H1 (cell line): ENCODE measurements at regions of chr16 and their contacts with region 1.

Region 1: GRCh38 chr16:89289428-89290395 is 72.2 kb downstream of the ZNF778 start:
- DNase-seq: peak; percentile 59 to 92
- H3K4me3 ChIP-seq: no peak overlapping the region
- H3K27ac ChIP-seq: no peak overlapping the region
- H3K4me1 ChIP-seq: peaks cover 16 to 47% (median 43%) of the 10 kb centered on the region in 4 experiments
- H3K27me3 ChIP-seq: no peaks in the 10 kb centered on the region
- CTCF ChIP-seq: peak; percentile 89 to 92 (median 92)
- EP300 ChIP-seq: no peak
- POLR2A ChIP-seq: no peak
- RAD21 ChIP-seq: peak; percentile 50 to 72; a peak in 3 of 4 replicates

Region 2: GRCh38 chr16:88713568-88714419 is 575.9 kb before region 1 on chr16:
- CTCF ChIA-PET with region 1: no interaction called
- POLR2A ChIA-PET with region 1: no interaction called
- DNase-seq: no peak
- H3K4me3 ChIP-seq: no peak overlapping the region
- H3K27ac ChIP-seq: no peak overlapping the region
- H3K4me1 ChIP-seq: peaks cover 0 to 3% (median 0%) of the 10 kb centered on the region in 4 experiments; a peak in 1 of 7 replicates
- H3K27me3 ChIP-seq: no peaks in the 10 kb centered on the region
- CTCF ChIP-seq: no peak
- EP300 ChIP-seq: no peak
- POLR2A ChIP-seq: no peak
- RAD21 ChIP-seq: no peak

Region 3: GRCh38 chr16:89268987-89269735 is 20.6 kb before region 1 on chr16:
- CTCF ChIA-PET with region 1: interaction called, 26 read pairs
- POLR2A ChIA-PET with region 1: interaction called, 13 read pairs
- DNase-seq: no peak
- H3K4me3 ChIP-seq: no peak overlapping the region
- H3K27ac ChIP-seq: no peak overlapping the region
- H3K4me1 ChIP-seq: no peaks in the 10 kb centered on the region
- H3K27me3 ChIP-seq: no peaks in the 10 kb centered on the region
- CTCF ChIP-seq: no peak
- EP300 ChIP-seq: no peak
- POLR2A ChIP-seq: no peak
- RAD21 ChIP-seq: no peak

Region 4: GRCh38 chr16:89303617-89304016 is 13.9 kb after region 1 on chr16:
- CTCF ChIA-PET with region 1: interaction called, 42 read pairs
- POLR2A ChIA-PET with region 1: interaction called, 13 read pairs
- DNase-seq: no peak
- H3K4me3 ChIP-seq: no peak overlapping the region
- H3K27ac ChIP-seq: no peak overlapping the region
- H3K4me1 ChIP-seq: peaks cover 0 to 2% (median under 1%) of the 10 kb centered on the region in 4 experiments; a peak in 3 of 7 replicates
- H3K27me3 ChIP-seq: no peaks in the 10 kb centered on the region
- CTCF ChIP-seq: no peak
- EP300 ChIP-seq: no peak
- POLR2A ChIP-seq: no peak
- RAD21 ChIP-seq: no peak

Region 5: GRCh38 chr16:89314357-89314756 is 24.6 kb after region 1 on chr16:
- CTCF ChIA-PET with region 1: interaction called, 42 read pairs
- POLR2A ChIA-PET with region 1: interaction called, 4 read pairs
- DNase-seq: no peak
- H3K4me3 ChIP-seq: no peak overlapping the region
- H3K27ac ChIP-seq: no peak overlapping the region
- H3K4me1 ChIP-seq: peaks cover 0 to 28% (median 10%) of the 10 kb centered on the region in 4 experiments; a peak in 5 of 7 replicates
- H3K27me3 ChIP-seq: no peaks in the 10 kb centered on the region
- CTCF ChIP-seq: no peak
- EP300 ChIP-seq: no peak
- POLR2A ChIP-seq: no peak
- RAD21 ChIP-seq: no peak

Region 6: DNA sequence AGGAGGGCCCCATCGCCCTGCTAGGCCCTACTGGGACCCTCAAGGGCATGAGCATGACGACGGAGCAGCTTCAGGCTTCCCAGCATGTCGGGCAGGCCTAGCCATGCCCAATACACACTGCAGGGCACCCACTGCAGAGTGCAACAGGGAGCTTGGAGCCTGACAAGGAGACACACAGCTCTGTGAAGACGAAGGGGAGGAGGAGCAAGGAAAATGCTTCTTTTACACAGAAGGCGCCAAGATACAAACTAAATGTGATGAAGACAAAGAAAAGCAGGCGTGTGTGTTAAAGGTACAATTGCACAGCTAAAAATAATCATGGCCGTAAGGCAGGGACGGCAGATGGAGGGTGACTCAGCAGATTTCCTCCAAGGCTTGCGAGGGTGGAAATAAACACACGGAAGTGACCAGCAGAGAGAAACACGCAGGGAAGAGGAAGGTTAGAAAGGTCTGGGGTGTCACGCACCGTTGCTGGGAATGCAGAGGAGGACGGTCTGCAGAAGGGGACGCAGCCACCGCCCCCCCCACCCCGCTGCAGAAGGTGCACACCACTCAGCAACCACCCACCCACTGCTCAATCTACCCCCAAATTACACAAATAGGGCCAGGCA is 36.3 kb after region 1 on chr16:
- CTCF ChIA-PET with region 1: interaction called, 10 read pairs
- POLR2A ChIA-PET with region 1: interaction called, 4 read pairs
- DNase-seq: no peak
- H3K4me3 ChIP-seq: no peak overlapping the region
- H3K27ac ChIP-seq: peak overlapping the region; percentile 43
- H3K4me1 ChIP-seq: peaks cover 13 to 42% (median 32%) of the 10 kb centered on the region in 4 experiments
- H3K27me3 ChIP-seq: no peaks in the 10 kb centered on the region
- CTCF ChIP-seq: no peak
- EP300 ChIP-seq: no peak
- POLR2A ChIP-seq: no peak
- RAD21 ChIP-seq: no peak

Region 7: GRCh38 chr16:89507834-89508590 is 218.3 kb after region 1 on chr16 and contains the start of gene SPG7:
- CTCF ChIA-PET with region 1: no interaction called
- POLR2A ChIA-PET with region 1: interaction called, 11 read pairs
- DNase-seq: peak in 1 of 2 experiments; percentile 95
- H3K4me3 ChIP-seq: peak within 1 kb of the TSS; percentile 91 to 95 (median 94)
- H3K27ac ChIP-seq: peak within 1 kb of the TSS; percentile 82
- H3K4me1 ChIP-seq: peaks cover 0 to 4% (median 0%) of the 10 kb centered on the region in 4 experiments; a peak in 4 of 7 replicates
- H3K27me3 ChIP-seq: peaks cover 0 to 4% (median 2%) of the 10 kb centered on the region in 4 experiments; a peak in 3 of 7 replicates
- CTCF ChIP-seq: 0 out of 4 replicates have a peak, but pooled peaks of 1 of the 3 experiments have one; percentile 3
- EP300 ChIP-seq: no peak
- POLR2A ChIP-seq: peak; percentile 83 to 88
- RAD21 ChIP-seq: no peak; a peak in 1 of 4 replicates
- total RNA-seq, gene SPG7: 109 and 113 TPM in 2 replicates